Activated T-helper 2 cell treated with anti-CD3 and anti-CD28 coated beads, Interferon-gamma antibody, Interleukin-2, Interleukin-4, amounts not matched to agents 10 μg/mL and 5 μg/mL and 100 μg/mL, durations not matched to agents 14 hours and 24 hours and 36 hours (primary cell): ENCODE measurements at regions of chr11 and their contacts with region 1.

Region 1: DNA sequence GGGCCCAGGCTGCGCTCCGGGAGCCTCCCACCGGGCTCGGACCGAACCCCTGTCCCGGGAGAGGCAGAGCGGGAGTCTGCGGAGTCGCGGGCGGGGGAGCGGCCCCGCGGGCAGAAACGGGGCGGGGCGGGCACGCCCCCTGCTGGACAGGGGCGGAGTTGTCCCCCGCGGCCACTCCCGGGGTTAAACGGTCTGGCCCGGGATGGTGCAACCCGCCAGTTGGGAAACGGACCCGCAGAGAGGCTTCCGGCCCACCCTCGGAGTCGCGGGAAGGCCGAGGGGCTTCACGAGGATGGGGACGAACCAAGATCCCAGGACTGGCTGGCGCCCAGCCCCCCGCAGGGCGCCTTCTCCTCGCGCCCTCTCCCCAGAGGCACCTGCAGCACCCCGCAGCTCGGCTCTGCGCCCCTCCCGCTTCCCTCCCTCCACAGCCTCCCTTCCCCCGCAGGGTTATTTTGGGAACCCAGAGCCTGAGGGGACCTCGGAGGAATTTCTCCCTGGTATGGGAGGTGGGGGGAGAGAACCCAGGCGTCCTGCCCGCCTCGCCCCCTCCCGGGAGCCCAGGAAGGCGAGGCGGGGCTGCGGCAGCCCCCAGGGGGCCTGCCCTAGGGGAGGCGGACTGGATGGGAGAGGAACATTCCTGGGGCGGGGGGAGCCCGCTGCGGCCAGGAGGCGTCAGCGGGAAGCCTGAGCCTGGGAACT is 902 bp downstream of the RASGRP2 start:
- DNase-seq: peak; percentile 73
- H3K4me3 Mint-ChIP-seq: peak overlapping the region; percentile 45
- H3K27ac Mint-ChIP-seq: no peak overlapping the region
- H3K4me1 Mint-ChIP-seq: peaks cover 30% of the 10 kb centered on the region
- H3K27me3 Mint-ChIP-seq: no peaks in the 10 kb centered on the region

Region 2: DNA sequence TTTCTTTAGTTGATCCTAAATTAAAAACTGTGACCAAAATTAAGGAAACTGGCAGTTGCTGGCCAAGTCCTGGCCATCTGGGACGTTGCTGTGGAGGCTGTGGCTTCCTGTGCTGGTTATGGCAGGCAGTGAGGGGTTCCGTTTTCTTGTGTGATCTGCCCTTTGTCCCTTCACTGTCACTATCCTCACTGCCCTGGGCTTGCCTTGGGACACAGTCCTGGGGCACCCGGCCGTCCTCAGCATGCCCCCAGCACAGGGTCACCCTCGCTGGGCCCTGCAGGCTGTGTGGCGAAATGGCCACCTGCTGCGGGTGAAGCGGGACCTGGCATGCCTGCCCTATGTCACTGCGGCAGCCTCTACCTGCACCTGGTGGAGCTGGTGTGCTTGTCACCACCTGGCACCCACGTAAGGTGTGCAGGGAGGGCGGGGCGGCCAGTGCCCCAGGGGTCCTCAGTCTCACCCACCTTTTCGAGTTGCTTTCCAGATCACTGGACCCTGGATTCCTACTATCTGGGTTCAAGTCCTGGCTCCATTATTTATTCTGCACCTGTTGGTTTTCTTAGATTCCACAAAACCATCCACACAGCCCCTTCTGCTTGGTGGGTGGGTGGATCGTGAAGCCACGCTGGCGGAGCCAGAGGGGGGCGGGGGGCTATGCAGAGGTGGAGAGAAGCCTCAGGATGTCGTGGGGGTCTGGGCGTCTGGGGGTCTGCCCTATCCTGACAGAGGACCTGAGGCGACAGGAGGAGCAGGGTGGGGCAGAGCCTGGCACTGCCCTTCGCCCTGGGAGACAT is 204.3 kb before region 1 on chr11:
- intact Hi-C with region 1: no loop called
- DNase-seq: no peak
- H3K4me3 Mint-ChIP-seq: no peak overlapping the region
- H3K27ac Mint-ChIP-seq: no peak overlapping the region
- H3K4me1 Mint-ChIP-seq: no peaks in the 10 kb centered on the region
- H3K27me3 Mint-ChIP-seq: peaks cover 11% of the 10 kb centered on the region

Region 3: GRCh38 chr11:64688534-64688982 is 54.5 kb before region 1 on chr11:
- intact Hi-C with region 1: loop called (anchors 1 kb)
- DNase-seq: peak; percentile 83
- H3K4me3 Mint-ChIP-seq: peak overlapping the region; percentile 15
- H3K27ac Mint-ChIP-seq: no peak overlapping the region
- H3K4me1 Mint-ChIP-seq: peaks cover 15% of the 10 kb centered on the region
- H3K27me3 Mint-ChIP-seq: peaks cover 30% of the 10 kb centered on the region

Region 4: GRCh38 chr11:64767344-64768299 is 24.6 kb after region 1 on chr11:
- intact Hi-C with region 1: loop called (anchors 2 kb)
- DNase-seq: peak; percentile 66
- H3K4me3 Mint-ChIP-seq: no peak overlapping the region
- H3K27ac Mint-ChIP-seq: peak overlapping the region; percentile 66
- H3K4me1 Mint-ChIP-seq: peaks cover 68% of the 10 kb centered on the region
- H3K27me3 Mint-ChIP-seq: no peaks in the 10 kb centered on the region

Region 5: GRCh38 chr11:64778508-64779346 is 35.7 kb after region 1 on chr11 and contains the start of gene SF1:
- intact Hi-C with region 1: loop called (anchors 2 kb)
- DNase-seq: peak; percentile 100
- H3K4me3 Mint-ChIP-seq: peak within 1 kb of the TSS; percentile 89
- H3K27ac Mint-ChIP-seq: peak within 1 kb of the TSS; percentile 99
- H3K4me1 Mint-ChIP-seq: peaks cover 46% of the 10 kb centered on the region
- H3K27me3 Mint-ChIP-seq: no peaks in the 10 kb centered on the region
- total RNA-seq, gene SF1: 460 and 461 TPM in 2 replicates